Right lobe of liver (tissue), 6 donors: ENCODE measurements at regions of chr3 and their contacts with region 1.

Region 1: DNA sequence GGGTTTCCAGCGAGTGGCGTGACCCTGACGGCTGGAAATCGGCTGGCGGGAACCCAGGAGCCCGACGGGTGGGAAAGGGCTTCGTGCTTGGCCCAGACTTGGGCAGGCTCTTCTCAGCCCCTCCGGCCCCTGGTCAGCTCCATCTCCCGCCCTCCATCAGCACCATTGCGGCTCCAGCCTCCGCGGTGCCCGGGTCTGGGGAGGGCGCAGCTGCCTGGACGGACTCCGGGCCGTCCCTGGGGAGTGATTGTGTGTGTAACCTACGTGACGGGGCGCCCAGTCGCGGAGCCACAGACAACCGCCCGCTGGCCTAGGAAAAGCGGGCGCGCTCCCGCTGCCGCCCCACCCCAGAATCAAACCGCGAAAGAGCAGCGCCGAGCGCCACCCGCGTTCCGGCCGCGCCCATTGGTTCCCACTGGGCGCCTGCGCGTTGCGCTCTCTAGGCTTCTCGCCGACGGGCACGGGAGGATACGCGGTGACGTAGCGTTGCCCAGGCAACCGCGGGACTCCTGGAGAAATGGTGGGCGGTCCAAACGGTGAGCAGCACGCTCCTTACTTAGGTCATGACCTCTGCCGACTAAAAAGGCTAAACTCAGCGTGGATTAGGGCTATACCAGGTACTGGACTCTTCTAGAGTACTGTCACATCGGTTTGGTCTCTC is at the start of gene CFAP20DC:
- DNase-seq: peak; percentile 94 to 97 (median 94)
- ATAC-seq: peak; percentile 97 to 98 (median 98)
- H3K4me3 ChIP-seq: peak within 1 kb of the TSS; percentile 61 to 79 (median 64)
- H3K27ac ChIP-seq: peak within 1 kb of the TSS in 2 of 3 donors; percentile 75 to 86
- H3K4me1 ChIP-seq: peaks cover 0 to 3% (median 0%) of the 10 kb centered on the region in 4 donors
- H3K27me3 ChIP-seq: no peaks in the 10 kb centered on the region
- CTCF ChIP-seq: no peak
- POLR2A ChIP-seq: peak; percentile 88
- total RNA-seq, gene CFAP20DC: 0.67 to 2.7 (median 1.5) TPM

Region 2: GRCh38 chr3:58640700-58641372 is 409.0 kb before region 1 on chr3:
- intact Hi-C with region 1: loop called in 1 of 2 experiments (anchors 10 kb)
- DNase-seq: peak; percentile 80 to 82 (median 80)
- ATAC-seq: peak; percentile 91 to 99 (median 96)
- H3K4me3 ChIP-seq: no peak overlapping the region
- H3K27ac ChIP-seq: no peak overlapping the region
- H3K4me1 ChIP-seq: peaks cover 0 to 3% (median 2%) of the 10 kb centered on the region in 4 donors
- H3K27me3 ChIP-seq: no peaks in the 10 kb centered on the region
- CTCF ChIP-seq: peak; percentile 84 to 90 (median 88)
- POLR2A ChIP-seq: no peak

Region 3: DNA sequence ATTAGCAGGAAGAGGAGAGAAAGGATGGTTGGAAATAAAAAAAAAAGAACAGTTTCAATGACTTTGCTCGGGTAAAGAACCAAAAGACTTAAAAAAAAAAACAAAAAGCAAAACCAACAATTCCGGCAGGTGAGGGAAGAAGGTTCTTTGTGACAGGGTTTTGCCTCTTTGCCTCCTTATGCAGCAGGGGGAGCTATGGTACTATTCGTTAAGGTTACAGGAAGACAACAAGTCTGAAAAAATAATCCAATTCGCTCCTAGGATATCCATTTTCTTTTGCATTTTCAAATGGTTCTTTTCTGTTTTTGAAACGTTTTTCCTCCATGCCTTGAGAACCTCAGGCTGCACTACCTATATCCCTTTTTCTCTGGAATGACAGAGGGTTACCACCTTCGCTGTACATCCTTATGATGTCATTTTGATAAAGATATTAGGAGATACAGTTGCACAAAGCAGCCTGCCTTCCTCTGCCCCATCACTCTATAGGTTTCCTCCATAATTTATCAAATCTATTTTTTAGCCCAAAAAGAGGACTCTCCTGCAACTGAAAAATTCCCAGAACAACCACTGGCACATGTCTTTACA is 55.0 kb before region 1 on chr3:
- intact Hi-C with region 1: loop called (anchors 5 to 10 kb)
- DNase-seq: peak in 1 of 3 donors; percentile 56
- ATAC-seq: peak; percentile 90 to 96 (median 93)
- H3K4me3 ChIP-seq: peak overlapping the region in 1 of 3 donors; percentile 7
- H3K27ac ChIP-seq: no peak overlapping the region
- H3K4me1 ChIP-seq: no peaks in the 10 kb centered on the region
- H3K27me3 ChIP-seq: no peaks in the 10 kb centered on the region
- CTCF ChIP-seq: peak; percentile 72 to 82 (median 75)
- POLR2A ChIP-seq: no peak

Region 4: GRCh38 chr3:59064276-59064675 is 14.5 kb after region 1 on chr3:
- intact Hi-C with region 1: no loop called
- DNase-seq: no peak
- ATAC-seq: no peak
- H3K4me3 ChIP-seq: no peak overlapping the region
- H3K27ac ChIP-seq: no peak overlapping the region
- H3K4me1 ChIP-seq: no peaks in the 10 kb centered on the region
- H3K27me3 ChIP-seq: no peaks in the 10 kb centered on the region
- CTCF ChIP-seq: no peak
- POLR2A ChIP-seq: no peak

Region 5: GRCh38 chr3:59185586-59186369 is 136.0 kb after region 1 on chr3:
- intact Hi-C with region 1: no loop called
- DNase-seq: no peak
- ATAC-seq: no peak
- H3K4me3 ChIP-seq: no peak overlapping the region
- H3K27ac ChIP-seq: no peak overlapping the region
- H3K4me1 ChIP-seq: no peaks in the 10 kb centered on the region
- H3K27me3 ChIP-seq: no peaks in the 10 kb centered on the region
- CTCF ChIP-seq: no peak
- POLR2A ChIP-seq: no peak